Dorsolateral prefrontal cortex (tissue), 120 donors: ENCODE measurements at regions of chrX and their contacts with region 1.

Region 1: DNA sequence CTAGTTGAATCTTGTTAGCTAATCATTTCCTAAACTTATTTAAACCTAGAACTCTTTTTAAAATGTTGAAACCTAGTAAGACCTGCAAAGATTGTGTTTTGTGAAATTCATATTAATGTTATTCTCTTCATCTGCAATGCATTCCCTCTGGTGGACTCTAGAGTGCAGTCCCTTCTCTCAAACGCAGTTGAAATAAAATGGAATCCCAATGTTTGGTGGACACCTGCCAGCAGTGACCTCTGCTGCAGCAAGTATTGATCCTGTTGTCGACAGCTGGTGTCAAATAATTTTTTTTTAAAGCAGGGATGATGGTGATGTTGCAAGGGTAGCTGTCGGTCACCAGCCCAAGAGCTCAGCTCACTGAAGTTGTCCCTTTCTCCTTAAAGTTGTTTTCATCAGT is 492.0 kb downstream of the ZIC3 start:
- DNase-seq: no peak
- H3K4me3 ChIP-seq: no peak overlapping the region
- H3K27ac ChIP-seq: no peak overlapping the region
- H3K27me3 ChIP-seq: peaks cover 0 to 35% (median 3%) of the 10 kb centered on the region in 45 donors
- CTCF ChIP-seq: no peak

Region 2: DNA sequence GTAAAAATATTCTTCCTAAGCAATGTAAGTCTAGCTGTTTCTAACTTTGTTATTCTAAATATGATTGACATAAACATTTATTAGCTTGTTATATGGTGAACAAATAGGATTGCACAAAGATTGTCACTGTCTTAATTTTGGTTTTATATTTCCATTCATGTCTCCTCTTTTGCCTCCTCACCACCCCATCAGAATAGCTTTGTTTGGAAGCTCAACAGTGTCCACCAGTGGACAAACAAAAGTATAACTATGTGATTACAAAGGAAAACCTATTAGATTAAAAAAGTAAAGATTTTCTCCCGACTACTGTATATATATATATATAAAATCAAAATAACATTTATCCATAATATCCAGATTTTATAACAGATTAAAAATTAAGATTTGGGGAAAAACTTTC is 23.7 kb before region 1 on chrX:
- intact Hi-C with region 1: loop called in 1 of 2 experiments (anchors 2 kb)
- DNase-seq: no peak
- H3K4me3 ChIP-seq: no peak overlapping the region
- H3K27ac ChIP-seq: no peak overlapping the region
- H3K27me3 ChIP-seq: peaks cover 0 to 65% (median 10%) of the 10 kb centered on the region in 45 donors
- CTCF ChIP-seq: peak in 9 of 56 donors; percentile 14 to 31 (median 16)